Dorsolateral prefrontal cortex (tissue), 120 donors: ENCODE measurements at regions of chr6 and their contacts with region 1.

Region 1: GRCh38 chr6:49519660-49520059 is 19.9 kb downstream of the GLYATL3 start:
- DNase-seq: no peak
- H3K4me3 ChIP-seq: no peak overlapping the region
- H3K27ac ChIP-seq: no peak overlapping the region
- H3K27me3 ChIP-seq: peaks cover 0 to 4% (median 0%) of the 10 kb centered on the region in 45 donors
- CTCF ChIP-seq: no peak

Region 2: DNA sequence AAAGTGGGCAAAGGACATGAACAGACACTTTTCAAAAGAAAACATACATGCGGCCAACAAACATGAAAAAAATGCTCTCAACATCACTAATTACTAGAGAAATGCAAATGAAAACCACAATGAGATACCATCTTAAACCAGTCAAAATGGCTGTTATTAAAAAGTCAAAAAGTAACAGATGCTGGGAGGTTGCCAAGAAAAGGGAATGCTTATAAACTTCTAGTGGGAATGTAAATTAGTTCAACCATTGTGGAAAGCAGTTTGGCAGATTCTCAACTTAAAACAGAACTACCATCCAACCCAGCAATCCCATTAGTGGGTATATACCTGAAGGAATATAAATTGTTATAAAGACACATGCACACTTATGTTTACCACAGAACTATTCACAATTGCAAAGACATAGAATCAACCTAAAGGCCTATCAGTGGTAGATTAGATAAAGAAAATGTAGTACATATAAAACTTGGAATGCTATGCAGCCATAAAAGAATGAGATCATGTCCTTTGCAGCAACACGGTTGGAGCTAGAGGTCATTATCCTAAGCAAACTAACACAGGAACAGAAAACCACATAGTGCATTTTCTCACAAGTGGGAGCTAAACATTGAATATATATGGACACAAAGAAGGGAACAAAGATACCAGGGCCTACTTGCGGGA is 40.2 kb before region 1 on chr6:
- intact Hi-C with region 1: no loop called
- DNase-seq: no peak
- H3K4me3 ChIP-seq: no peak overlapping the region
- H3K27ac ChIP-seq: no peak overlapping the region
- H3K27me3 ChIP-seq: no peaks in the 10 kb centered on the region
- CTCF ChIP-seq: no peak

Region 3: GRCh38 chr6:49606696-49607390 is 87.2 kb after region 1 on chr6:
- intact Hi-C with region 1: loop called in 1 of 2 experiments (anchors 5 kb)
- DNase-seq: peak in 2 of 10 donors; percentile 3 to 15
- H3K4me3 ChIP-seq: no peak overlapping the region
- H3K27ac ChIP-seq: no peak overlapping the region
- H3K27me3 ChIP-seq: peaks cover 0 to 11% (median 0%) of the 10 kb centered on the region in 45 donors
- CTCF ChIP-seq: peak; percentile 71 to 95 (median 85)